ENCODE measurements at regions of chr15 and their contacts with region 1.

Region 1: DNA sequence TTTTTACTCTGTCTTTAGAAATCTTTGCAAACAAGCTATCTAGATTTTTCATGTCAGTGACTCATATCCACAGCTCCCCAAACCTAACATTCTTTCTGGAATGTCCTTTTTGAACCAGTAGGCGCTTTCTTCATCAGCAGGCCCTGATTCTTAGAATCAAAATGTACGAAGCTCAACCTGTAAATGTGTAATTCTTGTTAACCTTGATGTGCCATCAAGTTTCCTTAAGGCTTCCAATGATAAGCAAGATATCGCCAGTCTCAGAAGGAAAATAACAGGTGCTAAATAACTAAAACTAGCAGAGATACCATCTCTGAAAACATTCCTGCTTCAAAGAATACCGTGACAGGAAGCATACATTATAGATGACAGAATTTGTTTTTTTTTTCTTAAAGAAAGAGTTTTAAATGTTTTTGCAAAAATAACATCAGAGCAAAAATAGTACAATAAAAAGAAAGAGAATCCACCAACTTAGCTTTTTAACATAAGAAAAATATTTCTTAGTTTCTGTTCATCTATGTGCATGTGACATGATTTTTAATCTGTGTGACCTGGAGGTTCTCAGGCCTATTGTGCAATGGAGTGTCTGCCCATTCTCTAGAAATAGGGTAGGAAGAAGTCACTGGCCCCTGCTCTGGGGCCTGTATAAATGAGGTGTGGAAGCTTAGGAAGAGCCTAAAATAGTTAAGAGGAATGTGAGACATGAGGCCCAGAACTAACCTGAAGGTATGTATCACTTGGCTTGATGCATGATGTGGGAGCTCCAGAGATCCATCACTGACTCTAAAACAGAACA is 14.7 kb upstream of the SECISBP2L start:
- DNase-seq: peak; percentile 71
- ATAC-seq: peak; percentile 85
- H3K4me3 ChIP-seq: no peak overlapping the region
- H3K27ac ChIP-seq: peak overlapping the region; percentile 23; the same call in 1 of the 2 replicates
- H3K4me1 ChIP-seq: peaks cover 10% of the 10 kb centered on the region
- H3K27me3 ChIP-seq: no peaks in the 10 kb centered on the region
- CTCF ChIP-seq: 0 out of 2 replicates have a peak, but pooled peaks have one; percentile 4
- POLR2A ChIP-seq: no peak
- RAD21 ChIP-seq: no peak

Region 2: GRCh38 chr15:49082960-49083359 is 22.1 kb after region 1 on chr15:
- CTCF ChIA-PET with region 1: interaction called, 12 read pairs
- POLR2A ChIA-PET with region 1: interaction called, 7 read pairs
- dilution Hi-C with region 1: no loop called
- in situ Hi-C with region 1: no loop called
- intact Hi-C with region 1: no loop called
- DNase-seq: peak; percentile 93
- ATAC-seq: peak; percentile 87
- H3K4me3 ChIP-seq: no peak overlapping the region
- H3K27ac ChIP-seq: peak overlapping the region; percentile 36; the same call in 1 of the 2 replicates
- H3K4me1 ChIP-seq: peaks cover 19% of the 10 kb centered on the region
- H3K27me3 ChIP-seq: no peaks in the 10 kb centered on the region
- CTCF ChIP-seq: no peak
- POLR2A ChIP-seq: no peak
- RAD21 ChIP-seq: no peak

Measured in IMR-90 (cell line).